Mammary epithelial cell (primary cell): ENCODE measurements at regions of chr18 and their contacts with region 1.

Region 1: GRCh38 chr18:72965611-72966010 is 97.8 kb upstream of the NETO1 start:
- DNase-seq: no peak
- H3K4me3 ChIP-seq: no peak overlapping the region
- H3K27ac ChIP-seq: no peak overlapping the region
- H3K4me1 ChIP-seq: no peaks in the 10 kb centered on the region
- H3K27me3 ChIP-seq: no peaks in the 10 kb centered on the region
- CTCF ChIP-seq: no peak

Region 2: DNA sequence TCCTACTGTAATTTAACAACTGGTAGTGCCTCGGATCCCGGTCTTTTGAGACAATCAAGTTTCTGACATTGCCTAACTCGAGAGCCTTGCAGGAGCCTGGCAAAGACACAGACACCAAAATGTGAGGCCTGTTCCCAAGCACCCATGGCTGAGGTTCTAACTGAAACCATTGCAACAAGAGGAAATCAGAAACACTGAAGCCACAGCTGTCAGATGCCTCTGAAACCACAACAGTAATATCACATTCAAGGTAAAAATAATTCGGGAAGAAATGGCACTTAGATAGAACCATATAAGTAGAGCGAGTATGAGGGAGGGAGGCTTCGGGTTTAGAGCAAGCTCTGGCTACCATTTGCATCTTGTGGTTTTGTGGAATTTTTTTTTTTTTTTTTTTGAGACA is 896.2 kb after region 1 on chr18:
- CTCF ChIA-PET with region 1: interaction called, 19 read pairs
- dilution Hi-C with region 1: no loop called
- in situ Hi-C with region 1: no loop called
- intact Hi-C with region 1: no loop called
- DNase-seq: no peak
- H3K4me3 ChIP-seq: no peak overlapping the region
- H3K27ac ChIP-seq: no peak overlapping the region
- H3K4me1 ChIP-seq: no peaks in the 10 kb centered on the region
- H3K27me3 ChIP-seq: no peaks in the 10 kb centered on the region
- CTCF ChIP-seq: no peak